ENCODE measurements at regions of chr14 and their contacts with region 1.

Region 1: DNA sequence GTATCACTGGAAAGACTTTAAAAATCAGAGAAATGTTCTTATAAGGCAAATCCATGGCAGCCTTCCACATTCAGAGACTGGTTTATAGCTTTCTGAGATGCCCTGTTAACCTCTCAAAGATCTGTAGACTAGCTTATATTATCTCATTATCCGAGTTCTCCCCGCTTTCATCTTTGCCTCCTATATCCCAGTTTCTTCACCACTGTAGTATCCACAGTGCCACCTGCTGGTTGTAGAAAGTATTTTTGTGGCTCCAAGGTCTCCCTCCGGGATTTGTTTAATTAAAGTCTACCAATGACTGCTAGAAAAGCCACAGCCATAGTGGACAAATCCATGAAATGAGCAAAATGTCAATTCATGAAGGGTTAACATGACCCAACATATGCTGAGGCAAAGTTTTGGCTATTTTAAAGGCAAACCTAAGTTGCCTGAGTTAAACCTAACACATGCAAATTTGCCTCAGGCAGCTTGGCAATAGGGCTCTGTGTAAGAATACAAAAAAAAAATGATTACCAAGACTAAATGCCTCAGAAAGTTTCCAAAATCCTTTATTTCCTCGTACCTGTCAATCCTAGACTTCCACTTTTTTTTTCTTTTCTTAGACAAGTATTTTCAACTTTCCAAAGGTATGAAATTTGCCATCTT is 218.8 kb upstream of the BMP4 start:
- DNase-seq: peak; percentile 89
- ATAC-seq: peak; percentile 78
- H3K4me3 ChIP-seq: no peak overlapping the region; a peak in 1 of 6 replicates
- H3K27ac ChIP-seq: peak overlapping the region; percentile 61
- H3K4me1 ChIP-seq: peaks cover 64% of the 10 kb centered on the region
- H3K27me3 ChIP-seq: no peaks in the 10 kb centered on the region
- CTCF ChIP-seq: peak; percentile 85
- EP300 ChIP-seq: peak in 1 of 2 experiments; percentile 59; a peak in 2 of 4 replicates
- POLR2A ChIP-seq: no peak
- RAD21 ChIP-seq: peak; percentile 85

Region 2: GRCh38 chr14:53613404-53614253 is 561.8 kb before region 1 on chr14:
- CTCF ChIA-PET with region 1: no interaction called
- POLR2A ChIA-PET with region 1: no interaction called
- in situ Hi-C with region 1: no loop called
- intact Hi-C with region 1: loop called (anchors 5 kb)
- DNase-seq: peak; percentile 100
- ATAC-seq: peak; percentile 98
- H3K4me3 ChIP-seq: peak overlapping the region; percentile 70 to 72 (median 70)
- H3K27ac ChIP-seq: peak overlapping the region; percentile 98
- H3K4me1 ChIP-seq: peaks cover 91% of the 10 kb centered on the region
- H3K27me3 ChIP-seq: no peaks in the 10 kb centered on the region
- CTCF ChIP-seq: peak; percentile 72
- EP300 ChIP-seq: peak; percentile 94 to 97
- POLR2A ChIP-seq: peak; percentile 62 to 73; a peak in 3 of 4 replicates
- RAD21 ChIP-seq: no peak; the same call in 1 of the 2 replicates

Region 3: GRCh38 chr14:54025661-54026060 is 149.8 kb before region 1 on chr14:
- CTCF ChIA-PET with region 1: interaction called, 10 read pairs
- POLR2A ChIA-PET with region 1: no interaction called
- in situ Hi-C with region 1: no loop called
- intact Hi-C with region 1: loop called (anchors 1 kb)
- DNase-seq: peak; percentile 36
- ATAC-seq: peak; percentile 52; the same call in 1 of the 3 replicates
- H3K4me3 ChIP-seq: no peak overlapping the region
- H3K27ac ChIP-seq: no peak overlapping the region
- H3K4me1 ChIP-seq: peaks cover 13% of the 10 kb centered on the region
- H3K27me3 ChIP-seq: no peaks in the 10 kb centered on the region
- CTCF ChIP-seq: peak; percentile 56
- EP300 ChIP-seq: no peak
- POLR2A ChIP-seq: no peak
- RAD21 ChIP-seq: 0 out of 2 replicates have a peak, but pooled peaks have one; percentile 29

Region 4: GRCh38 chr14:54108481-54109471 is 66.6 kb before region 1 on chr14:
- CTCF ChIA-PET with region 1: no interaction called
- POLR2A ChIA-PET with region 1: interaction called, 8 read pairs
- in situ Hi-C with region 1: no loop called
- intact Hi-C with region 1: loop called (anchors 1 kb)
- DNase-seq: peak; percentile 96
- ATAC-seq: peak; percentile 94
- H3K4me3 ChIP-seq: no peak overlapping the region; a peak in 1 of 6 replicates
- H3K27ac ChIP-seq: peak overlapping the region; percentile 83
- H3K4me1 ChIP-seq: peaks cover 84% of the 10 kb centered on the region
- H3K27me3 ChIP-seq: no peaks in the 10 kb centered on the region
- CTCF ChIP-seq: no peak
- EP300 ChIP-seq: peak in 1 of 2 experiments; percentile 97; a peak in 3 of 4 replicates
- POLR2A ChIP-seq: no peak
- RAD21 ChIP-seq: 0 out of 2 replicates have a peak, but pooled peaks have one; percentile 27

Region 5: DNA sequence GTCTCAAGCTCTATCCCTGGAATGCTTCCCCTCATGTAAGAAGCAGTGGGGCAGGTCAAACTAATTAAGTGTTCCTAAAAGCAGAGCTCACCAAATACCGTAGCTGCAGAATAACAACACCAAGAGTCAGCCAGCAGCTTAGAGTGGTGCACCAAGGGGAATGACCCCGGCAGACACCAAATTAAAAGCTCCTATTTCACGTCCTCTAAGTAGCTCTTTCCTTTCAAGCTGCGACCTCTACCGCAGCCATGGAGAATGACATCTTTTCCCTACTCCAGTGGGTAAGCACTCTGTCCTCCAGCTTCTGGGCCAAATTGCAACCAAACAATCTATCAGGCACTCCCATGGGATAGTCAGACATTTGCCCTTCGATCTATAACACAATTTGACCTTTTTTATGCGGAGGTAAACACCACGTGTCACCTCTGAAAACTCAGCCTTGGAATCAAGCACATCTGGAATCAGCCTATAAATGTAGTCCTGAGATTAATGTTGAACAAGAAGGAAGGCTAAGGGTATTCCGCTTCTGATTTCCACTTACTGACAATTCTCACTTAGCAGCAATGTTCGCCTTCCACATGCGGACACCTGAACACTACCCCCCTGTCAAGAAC is 153.8 kb after region 1 on chr14:
- CTCF ChIA-PET with region 1: no interaction called
- POLR2A ChIA-PET with region 1: no interaction called
- in situ Hi-C with region 1: no loop called
- intact Hi-C with region 1: loop called (anchors 2 kb)
- DNase-seq: peak; percentile 65
- ATAC-seq: peak; percentile 94
- H3K4me3 ChIP-seq: no peak overlapping the region
- H3K27ac ChIP-seq: no peak overlapping the region
- H3K4me1 ChIP-seq: peaks cover 19% of the 10 kb centered on the region
- H3K27me3 ChIP-seq: no peaks in the 10 kb centered on the region
- CTCF ChIP-seq: peak; percentile 93
- EP300 ChIP-seq: no peak
- POLR2A ChIP-seq: no peak
- RAD21 ChIP-seq: peak; percentile 86